CD4-positive, alpha-beta T cell (primary cell): ENCODE measurements at regions of chr5 and their contacts with region 1.

Region 1: DNA sequence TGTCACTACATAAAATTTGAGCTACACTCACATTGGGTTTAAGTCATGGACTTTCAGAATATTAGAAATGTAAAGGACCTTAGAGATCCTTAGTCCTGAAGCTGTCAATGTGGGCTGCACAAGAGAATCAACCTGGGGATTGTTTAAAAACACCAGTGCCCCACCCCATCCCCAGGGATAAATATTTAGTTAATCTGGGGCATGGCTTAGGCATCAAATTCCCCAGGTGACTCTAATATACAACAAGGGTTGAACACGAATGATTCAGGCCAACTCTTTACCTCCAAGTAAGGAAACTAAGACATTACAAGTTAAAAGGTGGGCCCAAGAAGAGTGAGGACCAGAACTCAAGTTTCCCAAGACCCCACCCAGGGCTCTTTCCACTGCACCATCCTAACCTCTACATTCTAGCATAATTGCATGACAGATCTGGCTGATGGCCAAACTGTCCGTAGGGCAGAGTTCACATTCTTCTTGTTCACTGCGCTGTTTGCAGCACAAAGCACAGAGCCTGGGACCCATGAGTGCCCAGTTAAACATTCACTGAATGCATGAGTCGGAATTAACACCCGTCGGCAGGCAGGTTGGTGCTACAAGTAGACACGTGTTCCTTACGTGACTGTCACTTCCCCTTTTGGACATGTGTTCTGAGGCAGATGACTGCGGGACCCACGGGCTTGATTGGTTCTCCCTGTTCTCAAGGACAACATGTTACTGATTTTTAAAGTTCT is 25.2 kb downstream of the CYFIP2 start:
- DNase-seq: peak in 3 of 14 experiments; percentile 23 to 56 (median 38)
- ATAC-seq: no peak
- H3K4me3 ChIP-seq: no peak overlapping the region
- H3K4me3 Mint-ChIP-seq: no peak overlapping the region
- H3K27ac ChIP-seq: peak overlapping the region in 1 of 2 donors; percentile 29
- H3K27ac Mint-ChIP-seq: peak overlapping the region; percentile 87
- H3K4me1 ChIP-seq: peaks cover 48% of the 10 kb centered on the region
- H3K4me1 Mint-ChIP-seq: peaks cover 75% of the 10 kb centered on the region
- H3K27me3 ChIP-seq: no peaks in the 10 kb centered on the region
- H3K27me3 Mint-ChIP-seq: no peaks in the 10 kb centered on the region
- CTCF ChIP-seq: no peak

Region 2: GRCh38 chr5:157303667-157304327 is 12.7 kb after region 1 on chr5:
- CTCF ChIA-PET with region 1: interaction called, 5 read pairs
- POLR2A ChIA-PET with region 1: interaction called, 9 read pairs
- intact Hi-C with region 1: loop called in 1 of 2 experiments (anchors 2 kb)
- DNase-seq: peak; percentile 45 to 86 (median 56)
- ATAC-seq: peak; percentile 72
- H3K4me3 ChIP-seq: peak overlapping the region; percentile 42
- H3K4me3 Mint-ChIP-seq: peak overlapping the region; percentile 87
- H3K27ac ChIP-seq: peak overlapping the region; percentile 54 to 65
- H3K27ac Mint-ChIP-seq: peak overlapping the region; percentile 80
- H3K4me1 ChIP-seq: peaks cover 57% of the 10 kb centered on the region
- H3K4me1 Mint-ChIP-seq: peaks cover 70% of the 10 kb centered on the region
- H3K27me3 ChIP-seq: no peaks in the 10 kb centered on the region
- H3K27me3 Mint-ChIP-seq: no peaks in the 10 kb centered on the region
- CTCF ChIP-seq: peak; percentile 26

Region 3: GRCh38 chr5:157342822-157343402 is 51.8 kb after region 1 on chr5:
- CTCF ChIA-PET with region 1: no interaction called
- POLR2A ChIA-PET with region 1: no interaction called
- intact Hi-C with region 1: no loop called
- DNase-seq: peak in 8 of 14 experiments; percentile 7 to 53 (median 22)
- ATAC-seq: no peak
- H3K4me3 ChIP-seq: no peak overlapping the region
- H3K4me3 Mint-ChIP-seq: no peak overlapping the region
- H3K27ac ChIP-seq: no peak overlapping the region
- H3K27ac Mint-ChIP-seq: no peak overlapping the region
- H3K4me1 ChIP-seq: peaks cover 16% of the 10 kb centered on the region
- H3K4me1 Mint-ChIP-seq: peaks cover 23% of the 10 kb centered on the region
- H3K27me3 ChIP-seq: no peaks in the 10 kb centered on the region
- H3K27me3 Mint-ChIP-seq: no peaks in the 10 kb centered on the region
- CTCF ChIP-seq: peak; percentile 63